Activated CD4-positive, alpha-beta T cell treated with anti-CD3 and anti-CD28 coated beads, Interleukin-2, amount 10 ng/mL, durations not matched to agents 24 days and 14 days (primary cell): ENCODE measurements at regions of chr11 and their contacts with region 1.

Region 1: DNA sequence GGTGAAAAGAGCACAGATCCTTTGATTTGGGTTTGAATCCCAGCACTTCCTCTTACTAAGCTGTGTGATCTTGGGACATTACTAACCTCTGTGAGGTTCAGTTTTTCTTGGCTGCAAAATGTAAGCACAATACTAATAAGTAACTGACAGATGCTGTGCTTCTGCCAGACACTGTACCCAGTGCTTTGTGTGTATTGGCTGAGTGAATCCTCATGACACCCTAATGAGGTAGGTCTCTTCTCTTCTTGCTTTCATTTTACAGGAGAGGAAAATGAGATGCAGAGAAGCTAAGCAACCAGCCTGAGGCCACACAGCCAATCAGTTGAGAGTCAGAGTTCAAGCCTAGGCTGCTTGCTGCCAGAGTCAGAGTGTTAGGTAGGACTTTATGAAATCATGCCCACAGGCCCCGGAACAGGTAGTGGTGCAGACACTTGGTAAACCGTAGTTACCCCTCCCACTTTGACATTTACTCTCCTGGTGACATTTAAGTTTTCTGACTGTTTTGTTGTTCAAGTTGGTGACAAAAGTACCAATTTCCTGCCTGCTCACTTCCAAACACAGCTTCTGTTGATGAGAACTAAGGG is 21.2 kb downstream of the PTPRJ start:
- DNase-seq: peak; percentile 96
- H3K4me3 Mint-ChIP-seq: peak overlapping the region; percentile 75
- H3K27ac Mint-ChIP-seq: peak overlapping the region; percentile 99
- H3K4me1 Mint-ChIP-seq: peaks cover 77% of the 10 kb centered on the region
- H3K27me3 Mint-ChIP-seq: no peaks in the 10 kb centered on the region

Region 2: GRCh38 chr11:47667135-47667534 is 334.4 kb before region 1 on chr11:
- intact Hi-C with region 1: loop called (anchors 10 kb)
- DNase-seq: no peak
- H3K4me3 Mint-ChIP-seq: no peak overlapping the region
- H3K27ac Mint-ChIP-seq: peak overlapping the region; percentile 16
- H3K4me1 Mint-ChIP-seq: peaks cover 9% of the 10 kb centered on the region
- H3K27me3 Mint-ChIP-seq: no peaks in the 10 kb centered on the region

Region 3: GRCh38 chr11:47863189-47863892 is 138.2 kb before region 1 on chr11:
- intact Hi-C with region 1: loop called (anchors 10 kb)
- DNase-seq: peak; percentile 70
- H3K4me3 Mint-ChIP-seq: peak overlapping the region; percentile 13
- H3K27ac Mint-ChIP-seq: peak overlapping the region; percentile 14
- H3K4me1 Mint-ChIP-seq: peaks cover 26% of the 10 kb centered on the region
- H3K27me3 Mint-ChIP-seq: no peaks in the 10 kb centered on the region

Region 4: GRCh38 chr11:47967577-47968425 is 33.7 kb before region 1 on chr11:
- intact Hi-C with region 1: no loop called
- DNase-seq: no peak
- H3K4me3 Mint-ChIP-seq: no peak overlapping the region
- H3K27ac Mint-ChIP-seq: no peak overlapping the region
- H3K4me1 Mint-ChIP-seq: no peaks in the 10 kb centered on the region
- H3K27me3 Mint-ChIP-seq: no peaks in the 10 kb centered on the region

Region 5: GRCh38 chr11:47980245-47981049 is 21.1 kb before region 1 on chr11 and contains the start of gene PTPRJ:
- intact Hi-C with region 1: loop called (anchors 1 kb)
- DNase-seq: peak; percentile 90
- H3K4me3 Mint-ChIP-seq: peak within 1 kb of the TSS; percentile 87
- H3K27ac Mint-ChIP-seq: peak within 1 kb of the TSS; percentile 72
- H3K4me1 Mint-ChIP-seq: peaks cover 24% of the 10 kb centered on the region
- H3K27me3 Mint-ChIP-seq: peaks cover 14% of the 10 kb centered on the region
- total RNA-seq, gene PTPRJ: 51.3 and 52.2 TPM in 2 replicates

Region 6: DNA sequence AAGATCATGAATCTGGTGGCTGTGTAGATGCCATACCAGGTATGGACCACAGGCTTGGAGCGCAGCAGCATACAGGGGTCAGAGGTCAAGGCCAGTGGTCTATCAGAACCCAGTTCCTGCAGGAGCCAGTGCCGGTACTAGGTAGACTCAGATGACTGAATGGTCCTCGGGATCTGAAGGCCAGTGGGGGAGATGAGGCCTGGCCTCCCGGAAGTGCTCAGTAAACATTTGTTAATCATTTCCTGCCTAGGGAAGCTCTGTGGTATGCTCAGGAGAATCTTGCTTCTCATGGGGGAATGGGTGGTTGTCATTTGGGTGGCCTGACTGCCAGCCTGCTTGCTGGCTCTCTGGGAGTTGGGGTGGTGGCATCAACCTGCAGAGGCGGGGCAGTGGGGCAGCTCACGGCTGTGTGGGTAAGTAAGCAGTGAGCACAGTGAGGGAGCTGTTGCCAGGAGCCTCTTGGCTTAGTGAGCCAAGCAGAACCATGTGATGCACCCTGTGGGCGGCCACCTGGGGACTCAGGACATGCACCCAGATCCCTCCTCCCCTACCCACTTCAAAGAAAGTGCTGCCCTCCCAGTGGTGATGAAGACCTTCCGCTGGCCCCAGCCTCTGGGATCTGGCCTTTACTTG is 11.9 kb after region 1 on chr11:
- intact Hi-C with region 1: loop called (anchors 1 kb)
- DNase-seq: peak; percentile 82
- H3K4me3 Mint-ChIP-seq: peak overlapping the region; percentile 56
- H3K27ac Mint-ChIP-seq: peak overlapping the region; percentile 98
- H3K4me1 Mint-ChIP-seq: peaks cover 83% of the 10 kb centered on the region
- H3K27me3 Mint-ChIP-seq: no peaks in the 10 kb centered on the region

Region 7: DNA sequence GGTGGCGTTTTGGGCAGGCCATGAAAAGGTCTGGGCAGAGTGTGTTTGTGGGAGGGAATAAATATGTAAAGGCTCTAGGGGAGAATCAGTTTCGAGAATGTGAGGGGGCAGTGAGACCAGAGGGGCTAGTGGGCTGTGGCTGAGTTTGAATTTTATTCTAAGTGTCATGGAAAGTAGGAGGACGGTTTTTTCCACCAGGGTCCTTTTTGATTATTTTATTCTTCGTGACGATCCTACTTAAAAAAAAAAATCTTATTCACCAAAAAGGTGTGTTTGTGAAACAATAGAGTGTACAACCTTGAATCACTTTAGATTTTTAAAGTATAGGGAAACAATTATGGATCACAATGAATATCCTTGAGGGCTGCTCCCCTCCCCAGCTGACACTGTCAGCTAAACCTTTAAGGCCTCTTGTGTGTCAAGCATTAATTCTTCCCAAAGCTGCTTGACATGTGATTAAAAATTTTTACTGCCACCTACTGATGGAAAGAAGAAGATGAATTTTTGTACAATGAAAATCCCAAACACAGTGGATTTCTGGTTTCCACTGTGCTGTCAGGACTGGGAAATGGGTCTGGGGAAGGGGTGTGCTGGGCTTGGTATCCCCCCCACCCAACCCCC is 107.6 kb after region 1 on chr11:
- intact Hi-C with region 1: loop called (anchors 1 kb)
- DNase-seq: no peak
- H3K4me3 Mint-ChIP-seq: peak overlapping the region; percentile 66
- H3K27ac Mint-ChIP-seq: peak overlapping the region; percentile 83
- H3K4me1 Mint-ChIP-seq: peaks cover 53% of the 10 kb centered on the region
- H3K27me3 Mint-ChIP-seq: no peaks in the 10 kb centered on the region

Region 8: DNA sequence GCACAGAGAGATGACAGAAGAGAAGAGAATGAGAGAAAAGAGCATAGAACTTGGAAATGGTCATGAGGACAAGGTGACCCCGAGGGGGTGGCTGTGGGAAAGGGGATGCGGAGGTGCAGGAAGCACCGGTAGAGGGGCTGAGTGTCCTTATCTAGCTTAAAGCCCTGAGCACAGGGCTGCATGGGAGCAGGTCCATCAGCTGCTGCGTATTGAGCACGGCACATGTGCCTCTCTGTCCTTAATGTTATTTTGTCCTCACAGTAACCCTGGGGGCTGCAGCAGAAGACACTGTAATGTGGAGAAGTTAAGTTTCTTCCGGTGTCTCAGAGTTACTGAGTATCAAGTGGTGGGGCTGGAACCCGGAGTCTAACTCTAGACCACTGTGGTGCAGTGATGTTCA is 120.7 kb after region 1 on chr11:
- intact Hi-C with region 1: no loop called
- DNase-seq: no peak
- H3K4me3 Mint-ChIP-seq: no peak overlapping the region
- H3K27ac Mint-ChIP-seq: no peak overlapping the region
- H3K4me1 Mint-ChIP-seq: peaks cover 4% of the 10 kb centered on the region
- H3K27me3 Mint-ChIP-seq: no peaks in the 10 kb centered on the region